Natural killer cell (primary cell): ENCODE measurements at regions of chrX and their contacts with region 1.

Region 1: GRCh38 chrX:107025545-107025944 is 25.5 kb upstream of the MORC4 start:
- DNase-seq: peak in 1 of 2 donors; percentile 32
- ATAC-seq: peak in 1 of 3 donors; percentile 44
- H3K4me3 ChIP-seq: no peak overlapping the region
- H3K4me3 Mint-ChIP-seq: no peak overlapping the region
- H3K27ac ChIP-seq: no peak overlapping the region
- H3K27ac Mint-ChIP-seq: no peak overlapping the region
- H3K4me1 ChIP-seq: no peaks in the 10 kb centered on the region
- H3K4me1 Mint-ChIP-seq: no peaks in the 10 kb centered on the region
- H3K27me3 ChIP-seq: no peaks in the 10 kb centered on the region
- H3K27me3 Mint-ChIP-seq: peaks cover 6 to 41% of the 10 kb centered on the region in 2 donors
- CTCF ChIP-seq: peak; percentile 24

Region 2: GRCh38 chrX:107429090-107429489 is 403.5 kb after region 1 on chrX:
- intact Hi-C with region 1: loop called (anchors 5 kb)
- DNase-seq: peak in 1 of 2 donors; percentile 54
- ATAC-seq: no peak
- H3K4me3 ChIP-seq: no peak overlapping the region
- H3K4me3 Mint-ChIP-seq: no peak overlapping the region
- H3K27ac ChIP-seq: no peak overlapping the region
- H3K27ac Mint-ChIP-seq: no peak overlapping the region
- H3K4me1 ChIP-seq: no peaks in the 10 kb centered on the region
- H3K4me1 Mint-ChIP-seq: no peaks in the 10 kb centered on the region
- H3K27me3 ChIP-seq: no peaks in the 10 kb centered on the region
- H3K27me3 Mint-ChIP-seq: peaks cover 15 to 23% of the 10 kb centered on the region in 2 donors
- CTCF ChIP-seq: peak; percentile 32

Region 3: DNA sequence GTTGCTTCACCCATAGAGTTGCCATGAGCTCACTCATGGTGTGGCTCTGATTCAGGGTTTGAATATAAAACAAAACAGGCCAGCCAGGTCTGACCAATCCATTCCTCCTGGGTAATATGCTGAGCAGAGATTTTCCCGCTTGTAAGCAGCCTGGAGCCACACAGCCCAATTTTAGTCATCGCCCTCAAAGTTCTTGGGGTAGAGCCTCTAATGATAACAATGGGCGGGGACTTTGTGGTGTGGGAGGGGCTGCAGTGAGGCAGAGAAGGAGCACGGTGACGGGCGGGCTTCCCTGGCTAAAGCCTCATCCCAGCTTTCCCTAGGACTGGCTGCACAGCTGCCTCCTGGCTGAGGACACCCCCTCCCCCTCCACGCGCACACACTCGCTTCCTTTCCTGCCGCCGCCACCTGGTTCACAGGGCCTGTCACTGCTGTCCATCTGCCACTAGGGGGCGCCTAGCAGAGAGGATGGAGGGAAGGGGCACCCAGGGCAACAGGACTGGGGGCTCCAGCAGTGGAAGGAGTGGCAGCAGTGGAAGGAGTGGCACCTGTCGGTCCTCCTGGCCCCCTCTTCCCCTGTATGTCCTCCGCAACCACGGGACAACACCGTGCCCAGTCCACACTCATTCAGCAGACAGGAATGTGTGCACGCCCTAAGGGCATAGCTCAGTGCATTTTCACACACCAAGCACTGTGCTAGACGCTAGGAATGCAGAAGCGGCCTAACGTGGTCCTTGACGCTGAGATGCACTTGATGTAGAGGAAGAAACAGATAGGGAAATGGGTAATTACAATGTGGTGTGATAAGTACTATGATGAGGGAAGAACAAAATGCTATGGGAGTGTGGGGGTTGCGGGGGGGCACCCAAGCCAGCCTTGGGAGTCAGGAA is 629.6 kb after region 1 on chrX:
- intact Hi-C with region 1: loop called (anchors 5 kb)
- DNase-seq: peak; percentile 52 to 82
- ATAC-seq: peak; percentile 87 to 91 (median 89)
- H3K4me3 ChIP-seq: no peak overlapping the region
- H3K4me3 Mint-ChIP-seq: no peak overlapping the region
- H3K27ac ChIP-seq: no peak overlapping the region
- H3K27ac Mint-ChIP-seq: no peak overlapping the region
- H3K4me1 ChIP-seq: peaks cover 4% of the 10 kb centered on the region
- H3K4me1 Mint-ChIP-seq: peaks cover 0 to 5% of the 10 kb centered on the region in 2 donors
- H3K27me3 ChIP-seq: no peaks in the 10 kb centered on the region
- H3K27me3 Mint-ChIP-seq: no peaks in the 10 kb centered on the region
- CTCF ChIP-seq: peak; percentile 64